ENCODE measurements at regions of chr5 and their contacts with region 1.

Region 1: DNA sequence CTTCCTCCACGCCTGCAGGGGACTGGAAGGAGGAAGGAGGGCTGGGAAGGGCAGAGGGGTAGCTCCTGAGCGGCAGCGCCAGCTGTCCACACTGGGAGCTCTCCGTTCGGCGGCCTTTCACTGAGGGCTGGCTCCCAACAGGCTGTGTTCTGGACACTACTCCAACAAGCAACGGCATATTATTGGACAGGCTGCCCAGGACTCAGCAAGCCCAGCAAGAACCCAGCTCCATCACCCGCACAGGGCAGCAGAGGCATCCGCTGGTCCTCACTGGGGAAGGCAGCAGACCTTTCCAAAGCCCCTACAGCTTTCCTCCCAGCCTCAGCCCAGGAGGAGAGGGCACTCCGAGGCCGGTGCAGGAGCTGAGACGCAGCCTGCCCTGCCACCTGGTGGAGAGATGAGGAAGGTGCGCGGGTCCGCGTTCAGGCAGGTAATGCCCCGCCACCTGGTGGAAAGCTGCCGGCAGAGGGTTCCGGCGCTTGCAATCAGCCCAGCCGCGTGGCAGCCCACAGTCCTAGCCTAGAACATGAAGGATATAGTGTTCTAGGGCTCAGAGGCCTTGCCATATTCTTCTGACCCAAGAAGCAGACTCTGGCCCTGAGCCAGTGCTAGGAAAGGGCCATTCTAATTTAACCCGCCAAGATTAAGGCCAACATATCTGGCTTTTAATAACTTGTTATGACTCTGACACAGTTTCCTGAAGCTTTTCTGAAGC is 74.4 kb downstream of the NRG2 start:
- DNase-seq: peak; percentile 89
- H3K4me3 Mint-ChIP-seq: no peak overlapping the region
- H3K27ac Mint-ChIP-seq: no peak overlapping the region
- H3K4me1 Mint-ChIP-seq: no peaks in the 10 kb centered on the region
- H3K27me3 Mint-ChIP-seq: no peaks in the 10 kb centered on the region
- CTCF ChIP-seq: peak; percentile 100

Region 2: DNA sequence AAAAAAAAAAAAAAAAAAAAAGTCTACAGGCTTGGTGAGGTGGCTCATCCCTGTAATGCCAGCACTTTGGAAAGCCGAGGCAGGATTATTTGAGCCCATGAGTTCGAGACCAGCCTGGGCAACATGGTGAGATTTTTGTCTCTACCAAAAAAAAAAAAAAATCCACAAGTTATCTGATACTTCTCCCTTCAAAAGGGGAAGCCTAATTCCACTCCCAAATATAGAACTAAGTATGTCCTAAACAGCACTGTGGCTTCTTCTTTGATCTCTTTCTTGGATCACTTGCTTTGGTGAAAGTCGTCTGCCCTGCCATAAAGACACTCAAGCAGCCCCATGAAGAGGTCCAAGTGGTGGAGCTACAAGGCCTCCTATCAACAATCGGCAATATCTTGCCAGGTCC is 467.3 kb before region 1 on chr5:
- CTCF ChIA-PET with region 1: no interaction called
- POLR2A ChIA-PET with region 1: no interaction called
- intact Hi-C with region 1: no loop called
- DNase-seq: no peak
- H3K4me3 Mint-ChIP-seq: no peak overlapping the region
- H3K27ac Mint-ChIP-seq: no peak overlapping the region
- H3K4me1 Mint-ChIP-seq: no peaks in the 10 kb centered on the region
- H3K27me3 Mint-ChIP-seq: no peaks in the 10 kb centered on the region
- CTCF ChIP-seq: no peak

Region 3: GRCh38 chr5:139795074-139796001 is 173.4 kb before region 1 on chr5 and contains the start of gene PSD2:
- CTCF ChIA-PET with region 1: interaction called, 774 read pairs
- POLR2A ChIA-PET with region 1: no interaction called
- intact Hi-C with region 1: no loop called
- DNase-seq: peak; percentile 43
- H3K4me3 Mint-ChIP-seq: peak within 1 kb of the TSS; percentile 39
- H3K27ac Mint-ChIP-seq: no peak within 1 kb of the TSS
- H3K4me1 Mint-ChIP-seq: no peaks in the 10 kb centered on the region
- H3K27me3 Mint-ChIP-seq: peaks cover 76% of the 10 kb centered on the region
- CTCF ChIP-seq: no peak
- total RNA-seq, gene PSD2: not detected in 2 replicates

Region 4: GRCh38 chr5:139856714-139857113 is 112.0 kb before region 1 on chr5:
- CTCF ChIA-PET with region 1: interaction called, 286 read pairs
- POLR2A ChIA-PET with region 1: no interaction called
- intact Hi-C with region 1: no loop called
- DNase-seq: no peak
- H3K4me3 Mint-ChIP-seq: no peak overlapping the region
- H3K27ac Mint-ChIP-seq: no peak overlapping the region
- H3K4me1 Mint-ChIP-seq: no peaks in the 10 kb centered on the region
- H3K27me3 Mint-ChIP-seq: no peaks in the 10 kb centered on the region
- CTCF ChIP-seq: no peak

Region 5: DNA sequence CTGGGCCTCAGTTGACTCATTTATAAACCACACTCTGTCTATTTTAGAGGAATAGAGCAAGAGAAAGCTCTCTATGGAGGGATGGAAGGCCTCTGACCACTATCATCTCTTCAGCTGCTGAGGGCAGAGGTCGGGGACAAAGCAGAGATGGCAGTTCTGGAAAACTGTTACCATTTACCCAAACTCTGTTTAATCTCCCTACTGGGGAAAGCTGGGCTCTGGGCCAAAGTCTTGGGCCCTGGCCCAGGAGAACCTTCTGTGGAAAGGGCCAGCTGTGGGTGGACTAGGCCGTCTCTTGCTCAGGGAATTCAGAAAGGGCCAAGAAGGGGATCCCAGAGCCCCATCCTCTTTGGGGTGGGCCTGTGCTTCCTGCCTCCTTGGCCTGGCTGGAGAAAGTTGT is 73.1 kb before region 1 on chr5:
- CTCF ChIA-PET with region 1: interaction called, 35 read pairs
- POLR2A ChIA-PET with region 1: no interaction called
- intact Hi-C with region 1: no loop called
- DNase-seq: no peak
- H3K4me3 Mint-ChIP-seq: no peak overlapping the region
- H3K27ac Mint-ChIP-seq: no peak overlapping the region
- H3K4me1 Mint-ChIP-seq: no peaks in the 10 kb centered on the region
- H3K27me3 Mint-ChIP-seq: peaks cover 28% of the 10 kb centered on the region
- CTCF ChIP-seq: no peak

Region 6: GRCh38 chr5:139985733-139986132 is 17.0 kb after region 1 on chr5:
- CTCF ChIA-PET with region 1: interaction called, 115 read pairs
- POLR2A ChIA-PET with region 1: interaction called, 4 read pairs
- intact Hi-C with region 1: no loop called
- DNase-seq: peak; percentile 94
- H3K4me3 Mint-ChIP-seq: no peak overlapping the region
- H3K27ac Mint-ChIP-seq: peak overlapping the region; percentile 78
- H3K4me1 Mint-ChIP-seq: peaks cover 12% of the 10 kb centered on the region
- H3K27me3 Mint-ChIP-seq: peaks cover 18% of the 10 kb centered on the region
- CTCF ChIP-seq: no peak

Region 7: DNA sequence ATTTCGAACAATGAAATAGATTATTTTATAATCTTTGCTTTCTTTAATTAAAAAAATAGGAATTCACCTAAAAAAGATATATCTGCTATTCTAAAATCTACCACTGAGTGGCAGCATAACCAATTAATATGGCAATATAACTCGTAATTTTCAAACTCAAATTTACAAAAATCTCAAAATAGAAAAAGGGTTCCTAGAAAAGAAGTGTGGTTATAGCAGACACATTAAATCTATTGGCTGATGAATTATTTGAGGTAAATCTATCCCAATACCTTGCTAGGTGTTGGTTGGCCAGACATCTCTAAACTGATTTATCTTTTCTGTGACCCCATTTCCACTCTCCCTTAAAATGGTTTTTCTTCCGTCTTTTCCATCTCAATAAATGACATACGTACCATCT is 104.6 kb after region 1 on chr5:
- CTCF ChIA-PET with region 1: interaction called, 22 read pairs
- POLR2A ChIA-PET with region 1: no interaction called
- intact Hi-C with region 1: no loop called
- DNase-seq: peak; percentile 33
- H3K4me3 Mint-ChIP-seq: no peak overlapping the region
- H3K27ac Mint-ChIP-seq: no peak overlapping the region
- H3K4me1 Mint-ChIP-seq: no peaks in the 10 kb centered on the region
- H3K27me3 Mint-ChIP-seq: peaks cover 15% of the 10 kb centered on the region
- CTCF ChIP-seq: peak; percentile 64